ENCODE measurements at regions of chr10 and their contacts with region 1.

Region 1: GRCh38 chr10:63268798-63269503 is 135.8 kb downstream of the NRBF2 start:
- DNase-seq: peak; percentile 91
- H3K4me3 Mint-ChIP-seq: peak overlapping the region; percentile 88
- H3K27ac Mint-ChIP-seq: peak overlapping the region; percentile 98
- H3K4me1 Mint-ChIP-seq: peaks cover 22% of the 10 kb centered on the region
- H3K27me3 Mint-ChIP-seq: no peaks in the 10 kb centered on the region

Region 2: GRCh38 chr10:61903221-61903927 is 1365.6 kb before region 1 on chr10:
- CTCF ChIA-PET with region 1: no interaction called
- intact Hi-C with region 1: loop called (anchors 5 kb)
- DNase-seq: peak; percentile 74
- H3K4me3 Mint-ChIP-seq: peak overlapping the region; percentile 99
- H3K27ac Mint-ChIP-seq: peak overlapping the region; percentile 100
- H3K4me1 Mint-ChIP-seq: peaks cover 42% of the 10 kb centered on the region
- H3K27me3 Mint-ChIP-seq: no peaks in the 10 kb centered on the region

Region 3: DNA sequence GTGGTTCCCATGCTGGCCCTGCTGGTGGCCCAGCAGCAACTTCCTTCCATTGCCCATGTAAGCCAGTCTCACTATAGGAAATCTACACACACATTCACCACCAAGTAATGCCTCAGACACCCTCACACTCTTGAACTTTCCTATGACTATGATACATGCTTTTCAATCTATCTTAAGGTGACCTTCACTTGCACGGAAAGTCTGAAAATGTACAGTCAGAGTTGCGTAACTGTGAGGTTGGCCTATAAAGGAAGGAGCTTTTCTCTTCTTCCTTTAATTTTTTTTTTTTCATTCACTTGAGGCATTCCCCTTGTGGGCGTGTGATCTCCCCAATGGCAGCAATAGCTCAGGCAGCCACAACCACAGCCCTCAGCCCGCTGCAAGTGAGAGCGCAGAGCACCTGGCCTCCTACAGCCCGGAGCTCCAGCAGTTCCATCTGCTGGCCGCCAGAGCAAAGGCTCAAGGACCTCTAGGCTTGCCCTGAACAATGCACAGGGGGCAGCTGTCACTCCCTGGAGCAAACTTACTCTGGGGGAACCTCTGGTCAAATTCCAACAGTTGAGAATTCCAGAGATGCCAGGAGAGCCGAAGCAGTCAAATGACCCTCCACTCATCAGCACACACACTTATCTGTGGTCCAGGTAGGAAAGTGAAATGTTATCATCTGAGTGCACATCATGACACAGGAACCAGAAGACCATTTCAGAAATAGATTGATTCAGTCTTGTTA is 587.6 kb before region 1 on chr10:
- CTCF ChIA-PET with region 1: no interaction called
- intact Hi-C with region 1: loop called (anchors 1 kb)
- DNase-seq: peak; percentile 93
- H3K4me3 Mint-ChIP-seq: no peak overlapping the region
- H3K27ac Mint-ChIP-seq: peak overlapping the region; percentile 72
- H3K4me1 Mint-ChIP-seq: peaks cover 33% of the 10 kb centered on the region
- H3K27me3 Mint-ChIP-seq: no peaks in the 10 kb centered on the region

Region 4: GRCh38 chr10:63173468-63174232 is 95.3 kb before region 1 on chr10:
- CTCF ChIA-PET with region 1: interaction called, 4 read pairs
- intact Hi-C with region 1: loop called (anchors 1 kb)
- DNase-seq: peak; percentile 18
- H3K4me3 Mint-ChIP-seq: no peak overlapping the region
- H3K27ac Mint-ChIP-seq: peak overlapping the region; percentile 71
- H3K4me1 Mint-ChIP-seq: peaks cover 62% of the 10 kb centered on the region
- H3K27me3 Mint-ChIP-seq: no peaks in the 10 kb centered on the region

Region 5: DNA sequence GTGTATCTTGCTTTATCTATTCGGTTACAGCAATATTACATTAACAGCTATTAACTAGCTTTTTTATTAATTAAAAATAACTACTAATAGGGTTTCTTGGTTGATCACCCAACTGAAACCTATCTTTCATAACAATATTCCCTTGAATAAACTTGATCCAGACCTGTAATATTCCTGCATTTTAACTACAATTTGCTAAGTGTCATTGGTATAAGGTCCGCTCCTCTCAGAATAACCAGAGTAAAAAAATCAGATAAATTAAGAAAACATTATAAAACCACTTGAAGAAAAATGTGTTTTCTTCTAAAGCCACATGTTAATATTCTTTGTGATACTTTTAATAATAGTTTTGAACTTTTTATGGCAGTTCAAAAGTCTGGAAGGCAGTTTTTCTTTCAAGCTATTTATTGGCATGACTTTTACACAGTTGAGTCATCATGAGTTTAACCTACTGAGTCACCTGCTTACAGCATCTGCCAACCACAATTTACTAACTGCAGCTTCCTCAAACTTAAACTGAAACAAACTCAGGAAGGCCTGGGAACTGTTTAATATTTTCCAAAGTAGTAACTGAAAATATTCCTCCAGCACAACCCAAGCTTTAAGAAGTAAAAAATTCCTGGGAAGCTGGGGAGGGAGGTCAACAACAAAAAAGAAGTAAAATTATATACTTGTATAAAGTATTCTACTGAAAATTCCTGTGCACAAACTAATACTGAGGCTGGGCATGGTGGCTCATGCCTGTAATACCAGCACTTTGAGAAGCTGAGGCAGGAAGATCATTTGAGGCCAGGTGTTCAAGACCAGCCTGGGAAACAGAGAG is 32.6 kb before region 1 on chr10:
- CTCF ChIA-PET with region 1: interaction called, 3 read pairs
- intact Hi-C with region 1: loop called (anchors 1 kb)
- DNase-seq: no peak
- H3K4me3 Mint-ChIP-seq: no peak overlapping the region
- H3K27ac Mint-ChIP-seq: peak overlapping the region; percentile 66
- H3K4me1 Mint-ChIP-seq: peaks cover 58% of the 10 kb centered on the region
- H3K27me3 Mint-ChIP-seq: no peaks in the 10 kb centered on the region

Region 6: DNA sequence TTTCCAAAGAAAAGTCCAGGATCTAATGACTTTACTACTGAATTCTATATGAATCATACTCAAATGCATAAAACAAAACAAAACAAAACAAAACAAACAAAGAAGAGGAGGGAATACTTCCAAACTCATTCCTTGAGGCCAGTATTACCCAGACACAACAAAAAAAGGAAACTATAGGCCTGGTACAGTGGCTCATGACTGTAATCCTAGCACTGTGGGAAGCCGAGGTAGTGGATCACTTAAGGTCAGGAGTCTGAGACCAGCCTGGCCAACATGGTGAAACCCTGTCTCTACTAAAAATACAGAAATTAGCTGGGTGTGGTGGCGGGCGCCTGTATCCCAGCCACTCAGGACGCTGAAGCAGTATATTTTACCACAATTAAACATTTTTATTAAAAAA is 21.2 kb before region 1 on chr10:
- CTCF ChIA-PET with region 1: no interaction called
- intact Hi-C with region 1: no loop called
- DNase-seq: no peak
- H3K4me3 Mint-ChIP-seq: no peak overlapping the region
- H3K27ac Mint-ChIP-seq: no peak overlapping the region
- H3K4me1 Mint-ChIP-seq: peaks cover 48% of the 10 kb centered on the region
- H3K27me3 Mint-ChIP-seq: no peaks in the 10 kb centered on the region

Region 7: GRCh38 chr10:63465293-63466143 is 196.6 kb after region 1 on chr10 and contains the start of gene JMJD1C:
- CTCF ChIA-PET with region 1: interaction called, 3 read pairs
- intact Hi-C with region 1: loop called (anchors 1 kb)
- DNase-seq: peak; percentile 69
- H3K4me3 Mint-ChIP-seq: peak within 1 kb of the TSS; percentile 92
- H3K27ac Mint-ChIP-seq: peak within 1 kb of the TSS; percentile 79
- H3K4me1 Mint-ChIP-seq: peaks cover 24% of the 10 kb centered on the region
- H3K27me3 Mint-ChIP-seq: no peaks in the 10 kb centered on the region
- total RNA-seq, gene JMJD1C: 54.1 to 56.6 TPM

Region 8: GRCh38 chr10:63629363-63630084 is 360.6 kb after region 1 on chr10:
- CTCF ChIA-PET with region 1: interaction called, 7 read pairs
- intact Hi-C with region 1: loop called (anchors 1 kb)
- DNase-seq: peak; percentile 89
- H3K4me3 Mint-ChIP-seq: peak overlapping the region; percentile 82
- H3K27ac Mint-ChIP-seq: peak overlapping the region; percentile 69
- H3K4me1 Mint-ChIP-seq: peaks cover 17% of the 10 kb centered on the region
- H3K27me3 Mint-ChIP-seq: no peaks in the 10 kb centered on the region